Psoas muscle (tissue), 8 donors: ENCODE measurements at regions of chr19 and their contacts with region 1.

Region 1: DNA sequence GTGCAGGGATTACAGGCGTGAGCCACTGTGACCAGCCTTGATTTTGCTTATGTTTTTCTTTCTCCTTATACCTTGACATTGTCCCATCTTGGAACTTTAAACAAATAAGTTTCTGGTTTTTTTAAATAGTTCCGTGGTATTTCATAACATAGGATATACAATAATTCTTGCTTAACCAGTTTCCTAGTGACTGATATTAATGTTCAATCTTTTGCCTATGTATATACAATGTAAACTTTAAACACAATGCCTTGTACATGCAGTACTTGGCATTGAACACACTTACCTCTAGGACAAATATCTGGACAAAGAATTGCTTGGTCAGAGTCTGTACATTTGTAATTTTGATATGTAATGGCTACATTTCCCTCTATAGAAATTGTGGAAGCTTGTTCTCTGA is 24.4 kb upstream of the SPACA4 start:
- DNase-seq: no peak
- ATAC-seq: no peak
- H3K4me3 ChIP-seq: no peak overlapping the region
- H3K27ac ChIP-seq: no peak overlapping the region
- H3K4me1 ChIP-seq: peaks cover 5% of the 10 kb centered on the region
- H3K27me3 ChIP-seq: no peaks in the 10 kb centered on the region
- CTCF ChIP-seq: no peak

Region 2: DNA sequence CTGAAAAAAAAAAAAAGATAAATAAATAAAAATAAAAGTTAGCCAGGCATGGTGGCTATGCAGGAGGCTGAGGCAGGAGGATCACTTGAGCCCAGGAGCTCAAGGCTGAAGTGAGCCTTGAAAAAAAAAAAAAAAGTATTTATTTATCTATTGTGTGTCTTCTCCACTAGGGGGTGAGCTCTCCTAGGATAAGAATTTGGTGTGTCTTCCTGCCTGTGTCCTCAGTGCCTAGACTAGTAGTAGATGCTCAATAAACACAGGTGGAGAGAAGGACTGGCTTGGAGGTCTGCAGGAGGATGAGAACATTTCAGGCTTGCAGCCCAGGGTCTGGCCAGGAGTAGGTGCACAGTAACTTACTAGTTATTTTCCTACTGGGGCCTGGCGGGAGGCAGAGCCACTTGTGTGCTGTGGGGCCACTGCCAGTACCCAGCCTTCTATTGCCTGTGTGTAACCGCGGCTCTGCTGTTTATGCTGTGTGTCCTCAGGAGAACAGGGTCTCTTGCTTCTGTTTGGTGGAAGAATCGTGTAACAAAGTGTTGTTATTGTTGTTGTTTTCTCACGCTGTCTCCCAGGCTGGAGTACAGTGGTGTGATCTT is 75.9 kb before region 1 on chr19:
- intact Hi-C with region 1: loop called (anchors 5 kb)
- DNase-seq: no peak
- ATAC-seq: peak in 3 of 4 donors; percentile 26 to 52 (median 32)
- H3K4me3 ChIP-seq: no peak overlapping the region
- H3K27ac ChIP-seq: no peak overlapping the region
- H3K4me1 ChIP-seq: no peaks in the 10 kb centered on the region
- H3K27me3 ChIP-seq: peaks cover 0 to 8% (median 3%) of the 10 kb centered on the region in 3 donors
- CTCF ChIP-seq: peak; percentile 48

Region 3: GRCh38 chr19:48618916-48619691 is 36.9 kb after region 1 on chr19 and contains the starts of genes RPL18 and SPHK2:
- intact Hi-C with region 1: no loop called
- DNase-seq: peak; percentile 98 to 99
- ATAC-seq: peak; percentile 88 to 90 (median 90)
- H3K4me3 ChIP-seq: peak within 1 kb of the TSS; percentile 99
- H3K27ac ChIP-seq: peak within 1 kb of the TSS; percentile 94
- H3K4me1 ChIP-seq: peaks cover 35% of the 10 kb centered on the region
- H3K27me3 ChIP-seq: no peaks in the 10 kb centered on the region
- CTCF ChIP-seq: no peak
- total RNA-seq, gene RPL18: 506 to 730 (median 645) TPM
- total RNA-seq, gene SPHK2: 4.1 to 12.8 (median 8.8) TPM